Mammary epithelial cell (primary cell): ENCODE measurements at regions of chr6 and their contacts with region 1.

Region 1: DNA sequence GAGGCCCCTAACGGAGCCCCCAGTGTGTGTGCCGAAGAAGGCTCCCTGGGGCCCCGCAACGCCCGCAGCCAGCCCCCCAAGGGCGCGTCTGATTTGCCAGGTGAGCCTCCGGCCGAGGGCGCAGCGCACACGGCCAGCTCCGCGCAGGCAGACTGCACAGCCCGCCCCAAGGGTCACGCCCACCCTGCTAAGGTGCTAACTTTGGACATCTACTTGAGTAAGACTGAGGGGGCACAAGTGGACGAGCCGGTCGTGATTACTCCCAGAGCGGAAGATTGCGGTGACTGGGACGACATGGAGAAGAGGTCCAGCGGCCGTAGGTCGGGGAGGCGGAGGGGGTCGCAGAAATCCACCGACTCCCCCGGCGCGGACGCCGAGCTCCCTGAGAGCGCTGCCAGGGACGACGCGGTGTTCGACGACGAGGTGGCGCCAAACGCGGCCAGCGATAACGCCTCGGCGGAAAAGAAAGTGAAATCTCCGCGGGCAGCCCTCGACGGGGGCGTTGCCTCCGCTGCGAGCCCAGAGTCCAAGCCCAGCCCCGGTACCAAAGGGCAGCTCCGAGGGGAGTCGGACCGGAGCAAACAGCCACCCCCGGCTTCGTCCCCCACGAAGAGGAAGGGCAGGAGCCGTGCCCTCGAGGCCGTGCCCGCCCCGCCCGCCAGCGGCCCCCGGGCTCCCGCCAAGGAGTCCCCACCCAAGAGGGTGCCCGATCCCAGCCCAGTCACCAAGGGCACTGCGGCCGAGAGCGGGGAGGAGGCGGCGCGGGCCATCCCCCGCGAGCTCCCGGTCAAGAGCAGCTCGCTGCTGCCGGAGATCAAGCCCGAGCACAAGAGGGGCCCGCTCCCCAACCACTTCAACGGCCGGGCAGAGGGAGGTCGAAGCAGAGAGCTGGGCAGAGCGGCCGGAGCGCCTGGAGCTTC is 117.0 kb downstream of the RTN4IP1 start:
- DNase-seq: peak; percentile 68
- H3K4me3 ChIP-seq: peak overlapping the region; percentile 41 to 62 (median 56)
- H3K27ac ChIP-seq: peak overlapping the region; percentile 70
- H3K4me1 ChIP-seq: peaks cover 41% of the 10 kb centered on the region
- H3K27me3 ChIP-seq: no peaks in the 10 kb centered on the region
- CTCF ChIP-seq: peak in 1 of 2 donors; percentile 22

Region 2: GRCh38 chr6:106477790-106478189 is 34.5 kb before region 1 on chr6:
- CTCF ChIA-PET with region 1: interaction called, 4 read pairs
- dilution Hi-C with region 1: no loop called
- in situ Hi-C with region 1: no loop called
- intact Hi-C with region 1: loop called (anchors 5 kb)
- DNase-seq: no peak
- H3K4me3 ChIP-seq: no peak overlapping the region
- H3K27ac ChIP-seq: no peak overlapping the region
- H3K4me1 ChIP-seq: peaks cover 46% of the 10 kb centered on the region
- H3K27me3 ChIP-seq: no peaks in the 10 kb centered on the region
- CTCF ChIP-seq: no peak

Region 3: DNA sequence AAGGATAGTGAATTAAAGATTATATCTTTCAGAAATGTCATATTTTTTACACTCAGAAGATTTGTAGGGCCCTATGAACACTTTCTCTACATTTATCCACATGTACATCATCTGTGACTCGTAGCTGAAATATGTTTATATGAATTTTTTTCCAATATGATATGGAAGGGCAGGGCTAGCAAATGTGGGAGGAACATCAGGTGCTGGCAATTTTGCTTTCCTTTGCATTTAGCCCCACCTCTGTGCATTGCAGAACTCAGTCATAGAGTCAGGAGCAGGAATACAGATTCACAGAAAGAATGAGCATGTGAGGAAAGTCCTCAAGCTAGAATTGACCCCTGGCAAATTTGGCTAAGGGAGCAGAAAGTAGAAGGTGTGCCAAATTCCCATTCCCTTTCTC is 21.9 kb before region 1 on chr6:
- CTCF ChIA-PET with region 1: interaction called, 3 read pairs
- dilution Hi-C with region 1: no loop called
- in situ Hi-C with region 1: no loop called
- intact Hi-C with region 1: loop called (anchors 2 kb)
- DNase-seq: peak; percentile 58
- H3K4me3 ChIP-seq: no peak overlapping the region
- H3K27ac ChIP-seq: peak overlapping the region; percentile 22
- H3K4me1 ChIP-seq: peaks cover 32% of the 10 kb centered on the region
- H3K27me3 ChIP-seq: no peaks in the 10 kb centered on the region
- CTCF ChIP-seq: no peak

Region 4: DNA sequence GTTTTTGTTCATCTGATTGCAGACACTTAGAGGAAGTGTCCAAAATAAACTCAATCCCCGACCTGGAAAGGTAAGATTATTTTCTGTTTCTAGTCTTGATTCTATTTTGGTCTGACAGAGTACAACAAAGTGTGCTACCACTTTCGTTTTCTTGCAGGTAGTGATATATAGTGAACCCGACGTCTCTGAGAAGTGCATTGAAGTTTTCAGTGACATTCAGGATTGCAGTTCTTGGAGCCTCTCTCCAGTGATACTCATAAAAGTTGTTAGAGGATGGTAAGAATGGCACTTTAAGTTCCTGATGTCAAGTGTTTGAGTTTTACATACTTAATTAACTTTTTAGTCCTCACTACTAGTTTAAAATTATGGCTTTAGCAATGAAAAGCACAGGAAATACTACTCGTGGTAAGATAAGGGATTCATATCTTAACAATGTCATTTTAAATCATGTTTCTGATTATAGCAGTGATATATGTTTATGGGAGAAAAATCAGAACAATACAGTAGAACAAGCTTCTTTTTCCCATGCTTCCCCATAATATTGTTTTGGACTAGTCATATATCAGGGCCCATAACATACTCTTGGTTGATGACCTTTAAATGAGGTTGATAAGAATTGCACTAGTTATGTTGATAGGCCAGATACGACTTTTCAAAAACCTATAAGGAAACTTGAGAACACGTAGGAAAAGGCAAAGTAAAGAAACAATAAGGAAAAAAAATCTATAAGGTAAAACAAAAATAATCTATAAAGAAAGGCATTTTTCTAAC is 13.0 kb after region 1 on chr6:
- CTCF ChIA-PET with region 1: interaction called, 5 read pairs
- dilution Hi-C with region 1: no loop called
- in situ Hi-C with region 1: no loop called
- intact Hi-C with region 1: loop called (anchors 1 kb)
- DNase-seq: peak; percentile 54
- H3K4me3 ChIP-seq: peak overlapping the region; percentile 14 to 38 (median 18)
- H3K27ac ChIP-seq: peak overlapping the region; percentile 60
- H3K4me1 ChIP-seq: peaks cover 28% of the 10 kb centered on the region
- H3K27me3 ChIP-seq: no peaks in the 10 kb centered on the region
- CTCF ChIP-seq: no peak

Region 5: GRCh38 chr6:106536851-106537250 is 24.5 kb after region 1 on chr6:
- CTCF ChIA-PET with region 1: no interaction called
- dilution Hi-C with region 1: no loop called
- in situ Hi-C with region 1: no loop called
- intact Hi-C with region 1: no loop called
- DNase-seq: no peak
- H3K4me3 ChIP-seq: no peak overlapping the region
- H3K27ac ChIP-seq: no peak overlapping the region
- H3K4me1 ChIP-seq: peaks cover 33% of the 10 kb centered on the region
- H3K27me3 ChIP-seq: no peaks in the 10 kb centered on the region
- CTCF ChIP-seq: no peak

Region 6: GRCh38 chr6:106547601-106548453 is 35.5 kb after region 1 on chr6:
- CTCF ChIA-PET with region 1: no interaction called
- dilution Hi-C with region 1: no loop called
- in situ Hi-C with region 1: no loop called
- intact Hi-C with region 1: loop called (anchors 1 kb)
- DNase-seq: peak; percentile 94
- H3K4me3 ChIP-seq: no peak overlapping the region
- H3K27ac ChIP-seq: peak overlapping the region; percentile 98
- H3K4me1 ChIP-seq: peaks cover 44% of the 10 kb centered on the region
- H3K27me3 ChIP-seq: no peaks in the 10 kb centered on the region
- CTCF ChIP-seq: peak in 1 of 2 donors; percentile 7